Activated naive CD4-positive, alpha-beta T cell treated with anti-CD3 and anti-CD28 coated beads, Interleukin-2, amount 10 ng/mL, durations not matched to agents 7 days and 5 days (primary cell): ENCODE measurements at regions of chr3 and their contacts with region 1.

Region 1: DNA sequence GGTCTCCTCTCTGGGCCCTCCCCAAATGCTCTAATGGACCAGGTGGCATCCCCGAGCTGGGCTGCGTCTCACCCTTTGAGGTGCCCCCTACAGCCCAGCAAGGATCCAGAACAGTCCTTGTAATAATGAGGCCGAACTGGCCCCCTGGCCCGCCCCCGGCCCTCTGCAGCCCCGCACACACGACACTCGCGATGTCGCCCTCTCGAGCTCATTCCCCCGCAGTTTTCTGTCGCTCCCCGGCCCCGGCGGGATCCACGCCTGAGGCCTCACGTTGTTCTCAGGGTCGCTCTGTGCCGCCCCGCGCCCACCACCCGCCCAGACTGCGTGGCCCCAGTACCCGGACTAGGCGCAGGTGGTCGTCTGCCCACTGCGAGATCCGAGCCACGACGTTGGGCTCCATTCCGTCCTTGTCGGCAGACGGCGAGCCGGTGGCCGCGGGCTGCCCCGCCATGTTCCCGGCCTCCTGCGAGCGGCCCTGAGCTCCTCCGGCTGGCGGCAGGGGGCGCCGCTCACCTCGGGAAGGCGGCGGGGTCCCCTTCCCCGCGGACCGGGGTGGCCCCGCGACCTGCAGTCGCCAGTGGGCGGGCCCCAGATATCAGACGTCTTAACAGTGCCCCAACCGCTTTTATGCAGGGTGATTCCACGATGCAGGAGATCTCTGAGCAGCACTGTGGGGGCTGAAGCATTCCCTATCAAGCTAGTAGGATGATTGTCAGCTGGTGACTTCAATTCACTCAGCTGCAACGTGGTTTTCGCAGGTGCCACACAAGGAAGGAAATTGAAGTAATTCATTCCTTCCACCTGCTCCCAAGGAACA is at the start of gene C3orf33:
- DNase-seq: peak; percentile 76
- H3K4me3 Mint-ChIP-seq: peak within 1 kb of the TSS; percentile 80
- H3K27ac Mint-ChIP-seq: peak within 1 kb of the TSS; percentile 29
- H3K4me1 Mint-ChIP-seq: peaks cover 13% of the 10 kb centered on the region
- H3K27me3 Mint-ChIP-seq: peaks cover 12% of the 10 kb centered on the region

Region 2: DNA sequence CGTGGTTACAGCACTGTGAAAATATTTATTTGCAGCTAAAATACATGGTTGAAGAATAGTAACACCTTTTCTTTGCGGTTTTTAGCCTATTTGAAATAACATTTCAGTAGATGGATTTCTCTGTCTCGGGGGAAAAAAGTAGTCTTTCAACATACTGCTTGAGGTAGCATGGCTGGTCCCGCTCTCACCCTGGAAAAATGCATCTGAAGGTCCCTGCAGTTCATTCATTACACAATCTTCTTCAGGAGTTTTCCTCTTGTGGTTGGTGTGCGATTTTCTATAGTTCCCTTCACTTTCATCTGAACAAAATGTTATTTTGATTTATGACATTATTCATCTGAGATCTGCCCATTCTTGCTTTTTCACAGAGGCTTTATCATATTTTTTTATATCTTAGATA is 588.4 kb before region 1 on chr3:
- CTCF ChIA-PET with region 1: no interaction called
- DNase-seq: no peak
- H3K4me3 Mint-ChIP-seq: no peak overlapping the region
- H3K27ac Mint-ChIP-seq: no peak overlapping the region
- H3K4me1 Mint-ChIP-seq: no peaks in the 10 kb centered on the region
- H3K27me3 Mint-ChIP-seq: no peaks in the 10 kb centered on the region

Region 3: DNA sequence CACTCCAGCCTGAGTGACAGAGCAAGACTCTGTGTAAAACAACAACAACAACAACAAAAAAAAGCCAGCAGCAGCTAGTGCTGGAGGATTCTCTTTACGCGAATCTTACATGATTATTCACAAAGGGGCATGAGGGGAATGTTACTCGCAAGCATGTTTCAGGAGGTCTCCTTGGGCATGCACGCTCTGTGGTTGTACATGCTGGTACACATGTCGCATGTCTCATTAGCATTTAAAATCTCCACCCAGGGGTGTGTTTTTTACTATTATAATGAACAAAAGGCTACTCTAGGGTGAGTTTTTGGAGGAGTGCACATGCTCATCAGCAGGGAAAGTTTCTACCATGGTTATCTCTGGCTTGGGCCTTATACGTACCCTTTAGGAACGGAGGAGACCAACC is 48.4 kb before region 1 on chr3:
- CTCF ChIA-PET with region 1: interaction called, 20 read pairs
- DNase-seq: no peak
- H3K4me3 Mint-ChIP-seq: no peak overlapping the region
- H3K27ac Mint-ChIP-seq: no peak overlapping the region
- H3K4me1 Mint-ChIP-seq: no peaks in the 10 kb centered on the region
- H3K27me3 Mint-ChIP-seq: no peaks in the 10 kb centered on the region

Region 4: GRCh38 chr3:155846119-155846518 is 40.1 kb after region 1 on chr3:
- CTCF ChIA-PET with region 1: interaction called, 11 read pairs
- DNase-seq: no peak
- H3K4me3 Mint-ChIP-seq: no peak overlapping the region
- H3K27ac Mint-ChIP-seq: no peak overlapping the region
- H3K4me1 Mint-ChIP-seq: peaks cover 38% of the 10 kb centered on the region
- H3K27me3 Mint-ChIP-seq: no peaks in the 10 kb centered on the region

Region 5: GRCh38 chr3:155859859-155860258 is 53.8 kb after region 1 on chr3:
- CTCF ChIA-PET with region 1: interaction called, 20 read pairs
- DNase-seq: no peak
- H3K4me3 Mint-ChIP-seq: no peak overlapping the region
- H3K27ac Mint-ChIP-seq: no peak overlapping the region
- H3K4me1 Mint-ChIP-seq: peaks cover 43% of the 10 kb centered on the region
- H3K27me3 Mint-ChIP-seq: peaks cover 15% of the 10 kb centered on the region

Region 6: GRCh38 chr3:155895379-155895900 is 89.4 kb after region 1 on chr3:
- CTCF ChIA-PET with region 1: interaction called, 12 read pairs
- DNase-seq: no peak
- H3K4me3 Mint-ChIP-seq: no peak overlapping the region
- H3K27ac Mint-ChIP-seq: no peak overlapping the region
- H3K4me1 Mint-ChIP-seq: peaks cover 2% of the 10 kb centered on the region
- H3K27me3 Mint-ChIP-seq: no peaks in the 10 kb centered on the region